Mammary epithelial cell (primary cell): ENCODE measurements at regions of chr19 and their contacts with region 1.

Region 1: GRCh38 chr19:18203863-18204393 is at the start of gene RAB3A:
- DNase-seq: peak; percentile 100
- H3K4me3 ChIP-seq: peak within 1 kb of the TSS; percentile 62 to 89 (median 70)
- H3K27ac ChIP-seq: peak within 1 kb of the TSS; percentile 42
- H3K4me1 ChIP-seq: peaks cover 21% of the 10 kb centered on the region
- H3K27me3 ChIP-seq: no peaks in the 10 kb centered on the region
- CTCF ChIP-seq: no peak
- total RNA-seq, gene RAB3A: 0.33 to 1.8 TPM

Region 2: DNA sequence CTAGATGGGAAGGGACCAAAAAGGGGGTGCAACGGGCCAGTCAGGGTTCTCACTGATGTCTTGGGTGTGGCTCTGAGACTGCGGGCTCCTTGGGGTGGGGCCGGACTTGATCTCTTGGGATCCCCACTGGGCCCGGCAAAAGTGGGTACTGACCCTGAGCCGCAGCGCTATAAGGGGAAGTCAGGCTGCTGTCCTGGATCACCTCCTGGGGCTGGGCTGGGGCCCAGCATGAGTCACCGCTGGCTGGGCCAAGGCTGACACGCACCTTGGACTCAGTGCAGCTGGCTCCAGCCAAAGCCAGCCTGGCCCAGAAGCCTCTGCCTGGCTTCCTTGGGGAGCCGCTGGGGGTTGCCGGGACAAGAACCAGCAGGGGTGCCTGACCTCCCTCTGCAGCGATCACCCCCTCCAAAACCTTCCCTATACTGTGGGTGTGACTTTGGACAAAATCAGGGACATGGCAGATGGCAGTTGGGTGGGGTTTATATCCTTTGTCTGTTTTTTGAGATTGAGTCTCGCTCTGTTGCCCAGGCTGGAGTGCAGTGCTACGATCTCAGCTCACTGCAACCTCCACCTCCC is 70.9 kb after region 1 on chr19:
- CTCF ChIA-PET with region 1: interaction called, 3 read pairs
- dilution Hi-C with region 1: no loop called
- in situ Hi-C with region 1: no loop called
- intact Hi-C with region 1: loop called (anchors 2 kb)
- DNase-seq: peak; percentile 86
- H3K4me3 ChIP-seq: no peak overlapping the region
- H3K27ac ChIP-seq: peak overlapping the region; percentile 27
- H3K4me1 ChIP-seq: peaks cover 33% of the 10 kb centered on the region
- H3K27me3 ChIP-seq: no peaks in the 10 kb centered on the region
- CTCF ChIP-seq: no peak

Region 3: GRCh38 chr19:18322759-18323460 is 119.0 kb after region 1 on chr19 and contains the start of gene LSM4:
- CTCF ChIA-PET with region 1: no interaction called
- dilution Hi-C with region 1: no loop called
- in situ Hi-C with region 1: loop called in 1 of 2 experiments (anchors 10 kb)
- intact Hi-C with region 1: loop called (anchors 2 kb)
- DNase-seq: peak; percentile 98
- H3K4me3 ChIP-seq: peak within 1 kb of the TSS; percentile 73 to 95 (median 82)
- H3K27ac ChIP-seq: peak within 1 kb of the TSS; percentile 82
- H3K4me1 ChIP-seq: peaks cover 16% of the 10 kb centered on the region
- H3K27me3 ChIP-seq: no peaks in the 10 kb centered on the region
- CTCF ChIP-seq: peak; percentile 15 to 61
- total RNA-seq, gene LSM4: 127 to 182 TPM